Activated CD4-positive, alpha-beta T cell treated with anti-CD3 and anti-CD28 coated beads, Interleukin-2, amount 10 ng/mL, durations not matched to agents 24 days and 14 days (primary cell): ENCODE measurements at regions of chr20 and their contacts with region 1.

Region 1: GRCh38 chr20:35954200-35954906 is at the start of gene SCAND1:
- DNase-seq: peak; percentile 99
- H3K4me3 Mint-ChIP-seq: peak within 1 kb of the TSS; percentile 100
- H3K27ac Mint-ChIP-seq: peak within 1 kb of the TSS; percentile 100
- H3K4me1 Mint-ChIP-seq: peaks cover 14% of the 10 kb centered on the region
- H3K27me3 Mint-ChIP-seq: peaks cover 5% of the 10 kb centered on the region
- total RNA-seq, gene SCAND1: 35.1 and 38.1 TPM in 2 replicates

Region 2: DNA sequence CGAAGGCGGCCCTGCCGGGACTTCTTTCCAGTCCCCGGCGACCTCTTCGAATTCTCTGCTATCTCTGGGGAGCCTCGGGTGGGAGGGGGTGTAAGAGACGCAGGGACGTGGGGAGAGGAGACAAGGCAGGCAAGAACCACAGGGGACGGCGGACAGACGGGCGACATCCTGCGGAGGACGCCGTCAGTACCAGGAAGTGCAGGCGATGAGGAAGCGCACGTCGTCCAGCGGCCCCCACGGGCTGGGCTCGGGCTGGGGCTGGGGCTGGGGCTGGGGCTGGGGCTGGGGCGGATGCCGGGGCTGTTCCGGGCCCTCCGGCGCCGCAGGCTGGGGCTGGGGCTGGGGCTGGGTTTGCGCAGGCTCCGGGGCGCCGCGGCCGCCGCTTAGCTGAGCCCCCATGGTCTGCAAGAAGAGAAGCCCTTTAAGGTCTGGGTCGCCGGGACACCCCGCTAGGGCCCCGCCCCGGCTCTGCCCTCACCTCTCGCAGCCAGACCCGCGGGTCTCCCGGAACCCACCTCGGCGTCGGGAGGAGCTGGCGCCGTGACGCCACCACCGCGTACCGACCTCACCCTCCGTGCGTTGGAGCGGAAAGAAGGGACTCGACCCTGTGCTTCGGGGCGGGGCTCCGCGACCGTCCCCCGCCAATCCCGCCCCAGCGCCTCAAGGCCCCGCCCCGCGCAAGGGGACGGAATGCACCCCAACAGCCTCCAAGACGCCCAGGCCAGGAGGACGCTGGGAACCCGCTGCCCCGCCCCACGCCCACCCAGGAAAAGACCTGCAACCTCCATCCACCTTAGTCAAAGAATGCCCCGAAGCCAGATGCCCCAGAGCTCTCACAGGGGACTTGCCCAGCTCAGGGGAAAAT is 676.6 kb before region 1 on chr20 and contains the start of gene MMP24OS:
- intact Hi-C with region 1: loop called (anchors 5 kb)
- DNase-seq: peak; percentile 97
- H3K4me3 Mint-ChIP-seq: peak within 1 kb of the TSS; percentile 99
- H3K27ac Mint-ChIP-seq: peak within 1 kb of the TSS; percentile 97
- H3K4me1 Mint-ChIP-seq: peaks cover 30% of the 10 kb centered on the region
- H3K27me3 Mint-ChIP-seq: no peaks in the 10 kb centered on the region
- total RNA-seq, gene MMP24OS: 26.2 and 27.3 TPM in 2 replicates

Region 3: GRCh38 chr20:35619196-35620095 is 334.9 kb before region 1 on chr20:
- intact Hi-C with region 1: loop called (anchors 1 kb)
- DNase-seq: peak; percentile 93
- H3K4me3 Mint-ChIP-seq: peak overlapping the region; percentile 92
- H3K27ac Mint-ChIP-seq: peak overlapping the region; percentile 94
- H3K4me1 Mint-ChIP-seq: peaks cover 30% of the 10 kb centered on the region
- H3K27me3 Mint-ChIP-seq: no peaks in the 10 kb centered on the region

Region 4: GRCh38 chr20:35699127-35699975 is 255.0 kb before region 1 on chr20 and contains the starts of genes NFS1 and ROMO1:
- intact Hi-C with region 1: loop called (anchors 2 kb)
- DNase-seq: peak; percentile 95
- H3K4me3 Mint-ChIP-seq: peak within 1 kb of the TSS; percentile 91
- H3K27ac Mint-ChIP-seq: peak within 1 kb of the TSS; percentile 98
- H3K4me1 Mint-ChIP-seq: peaks cover 40% of the 10 kb centered on the region
- H3K27me3 Mint-ChIP-seq: no peaks in the 10 kb centered on the region
- total RNA-seq, gene NFS1: 41.3 and 42.8 TPM in 2 replicates
- total RNA-seq, gene ROMO1: 82.3 and 94.9 TPM in 2 replicates

Region 5: GRCh38 chr20:35771689-35772562 is 182.4 kb before region 1 on chr20 and contains the start of gene PHF20:
- intact Hi-C with region 1: loop called (anchors 2 kb)
- DNase-seq: peak; percentile 99
- H3K4me3 Mint-ChIP-seq: peak within 1 kb of the TSS; percentile 81
- H3K27ac Mint-ChIP-seq: peak within 1 kb of the TSS; percentile 93
- H3K4me1 Mint-ChIP-seq: peaks cover 51% of the 10 kb centered on the region
- H3K27me3 Mint-ChIP-seq: no peaks in the 10 kb centered on the region
- total RNA-seq, gene PHF20: 53.8 and 62.9 TPM in 2 replicates

Region 6: DNA sequence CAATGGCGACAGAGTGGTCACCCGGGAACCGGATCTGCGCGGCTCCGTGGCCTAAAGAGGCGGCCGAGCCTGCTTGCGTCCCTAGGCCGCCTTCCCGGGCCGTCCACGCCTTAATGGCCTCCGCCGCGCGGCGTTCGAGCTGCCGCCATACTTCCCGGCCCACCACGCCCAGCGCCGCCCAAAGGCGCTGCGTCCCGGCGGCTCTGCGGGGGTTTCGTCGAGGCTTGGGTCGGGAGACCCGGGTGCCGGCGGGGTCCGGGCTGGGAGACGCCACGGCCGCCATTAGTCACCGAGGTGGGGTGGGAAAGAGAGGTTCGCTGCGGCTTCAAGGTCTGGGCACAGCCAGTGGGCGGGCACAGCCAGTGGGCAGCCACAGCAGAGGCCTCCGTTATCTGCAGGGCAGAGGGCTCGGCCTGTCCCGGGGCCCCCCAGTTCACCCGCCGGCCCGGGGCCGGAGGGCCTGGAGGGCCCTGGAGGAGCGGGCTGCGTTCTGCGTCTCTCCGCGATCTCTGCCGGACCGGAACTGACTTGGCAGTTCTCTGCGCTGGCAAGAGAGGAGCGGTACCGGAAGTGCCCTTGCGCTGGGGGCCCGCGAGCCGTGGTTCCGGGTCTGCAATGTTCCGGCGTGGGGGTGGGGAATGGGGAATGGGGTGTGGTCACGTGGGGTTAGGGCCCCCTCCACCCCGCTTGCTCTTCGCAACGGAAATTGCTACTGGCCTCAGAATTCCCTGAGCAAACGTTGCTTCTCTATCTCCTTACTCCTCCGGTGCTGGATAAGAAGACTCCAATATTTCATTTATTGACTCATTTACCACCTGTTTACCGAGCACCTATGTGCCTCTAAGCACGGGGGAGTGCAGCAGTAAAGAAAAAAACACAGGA is 96.3 kb after region 1 on chr20:
- intact Hi-C with region 1: loop called (anchors 1 kb)
- DNase-seq: peak; percentile 96
- H3K4me3 Mint-ChIP-seq: peak overlapping the region; percentile 94
- H3K27ac Mint-ChIP-seq: peak overlapping the region; percentile 88
- H3K4me1 Mint-ChIP-seq: peaks cover 25% of the 10 kb centered on the region
- H3K27me3 Mint-ChIP-seq: peaks cover 11% of the 10 kb centered on the region